B cell (primary cell): ENCODE measurements at regions of chr11 and their contacts with region 1.

Region 1: GRCh38 chr11:61899146-61899841 is 7.9 kb upstream of the FADS3 start:
- DNase-seq: peak; percentile 96
- ATAC-seq: peak; percentile 96
- H3K4me3 ChIP-seq: no peak overlapping the region
- H3K4me3 Mint-ChIP-seq: peak overlapping the region; percentile 41
- H3K27ac ChIP-seq: peak overlapping the region in 1 of 2 donors; percentile 33
- H3K27ac Mint-ChIP-seq: peak overlapping the region; percentile 85
- H3K4me1 ChIP-seq: peaks cover 21 to 31% of the 10 kb centered on the region in 2 donors
- H3K4me1 Mint-ChIP-seq: peaks cover 26% of the 10 kb centered on the region
- H3K27me3 ChIP-seq: peaks cover 0 to 3% (median 2%) of the 10 kb centered on the region in 4 experiments
- H3K27me3 Mint-ChIP-seq: peaks cover 4% of the 10 kb centered on the region
- CTCF ChIP-seq: peak; percentile 100

Region 2: DNA sequence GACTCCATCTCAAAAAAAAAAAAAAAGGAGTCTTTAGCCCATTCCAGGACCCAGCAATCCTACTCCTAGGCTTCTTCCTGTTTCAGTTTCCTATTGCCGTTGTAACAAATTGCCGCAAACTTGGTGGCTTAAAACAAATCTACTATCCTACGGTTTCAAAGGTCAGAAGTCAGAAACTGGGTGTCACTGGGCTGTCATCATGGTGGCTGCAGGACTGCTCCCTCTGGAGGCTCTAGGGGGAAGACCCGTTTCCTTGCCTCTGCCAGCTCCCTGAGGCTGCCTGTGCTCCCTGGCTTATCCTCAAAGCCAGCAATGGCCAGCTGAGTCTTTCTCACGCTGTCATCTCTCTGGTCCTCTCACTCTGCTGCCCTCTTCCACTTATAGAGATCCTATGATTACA is 227.8 kb before region 1 on chr11:
- CTCF ChIA-PET with region 1: no interaction called
- POLR2A ChIA-PET with region 1: no interaction called
- intact Hi-C with region 1: no loop called
- DNase-seq: no peak
- ATAC-seq: no peak
- H3K4me3 ChIP-seq: no peak overlapping the region
- H3K4me3 Mint-ChIP-seq: no peak overlapping the region
- H3K27ac ChIP-seq: no peak overlapping the region
- H3K27ac Mint-ChIP-seq: no peak overlapping the region
- H3K4me1 ChIP-seq: no peaks in the 10 kb centered on the region
- H3K4me1 Mint-ChIP-seq: no peaks in the 10 kb centered on the region
- H3K27me3 ChIP-seq: peaks cover 0 to 6% (median 1%) of the 10 kb centered on the region in 4 experiments
- H3K27me3 Mint-ChIP-seq: peaks cover 34% of the 10 kb centered on the region
- CTCF ChIP-seq: no peak

Region 3: GRCh38 chr11:61871158-61871597 is 28.1 kb before region 1 on chr11:
- CTCF ChIA-PET with region 1: interaction called, 141 read pairs
- POLR2A ChIA-PET with region 1: no interaction called
- intact Hi-C with region 1: loop called (anchors 1 kb)
- DNase-seq: peak; percentile 88
- ATAC-seq: peak; percentile 97
- H3K4me3 ChIP-seq: peak overlapping the region in 4 of 5 experiments; percentile 13 to 38 (median 26)
- H3K4me3 Mint-ChIP-seq: peak overlapping the region; percentile 84
- H3K27ac ChIP-seq: no peak overlapping the region
- H3K27ac Mint-ChIP-seq: peak overlapping the region; percentile 83
- H3K4me1 ChIP-seq: peaks cover 9 to 12% of the 10 kb centered on the region in 2 donors
- H3K4me1 Mint-ChIP-seq: peaks cover 8% of the 10 kb centered on the region
- H3K27me3 ChIP-seq: peaks cover 0 to 4% (median 0%) of the 10 kb centered on the region in 4 experiments
- H3K27me3 Mint-ChIP-seq: no peaks in the 10 kb centered on the region
- CTCF ChIP-seq: peak; percentile 98

Region 4: DNA sequence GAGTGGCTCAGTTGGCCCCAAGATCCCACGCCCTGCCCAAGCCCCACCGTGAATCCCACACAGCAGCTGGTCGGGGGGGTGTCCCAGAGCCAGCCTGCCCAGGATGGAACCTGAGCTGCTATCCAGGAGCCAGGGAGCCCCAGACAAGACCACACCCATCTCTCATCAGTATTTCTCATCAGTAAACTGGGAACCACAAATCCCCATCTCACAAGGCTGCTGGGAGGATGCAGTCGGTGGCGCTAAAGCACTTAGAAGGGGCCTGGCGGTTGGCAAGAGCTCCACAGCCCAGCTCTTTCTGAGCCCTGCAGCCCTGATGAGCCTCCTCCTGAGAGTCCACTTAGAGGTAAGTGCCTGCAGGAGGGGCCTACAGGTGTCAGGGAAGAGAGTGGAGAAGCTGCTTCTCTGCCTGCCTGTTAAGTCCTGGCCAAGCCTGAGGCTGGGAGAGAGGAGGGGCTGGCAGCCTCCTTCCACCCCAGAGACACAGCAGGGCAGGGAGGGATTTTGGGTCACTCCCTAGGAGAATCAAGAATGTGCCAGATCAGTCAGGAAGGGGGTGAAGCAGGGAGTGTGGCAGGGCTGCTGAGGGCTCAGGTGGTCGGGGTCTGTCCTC is 14.0 kb before region 1 on chr11:
- CTCF ChIA-PET with region 1: interaction called, 144 read pairs
- POLR2A ChIA-PET with region 1: interaction called, 9 read pairs
- intact Hi-C with region 1: loop called (anchors 1 kb)
- DNase-seq: no peak
- ATAC-seq: no peak
- H3K4me3 ChIP-seq: no peak overlapping the region
- H3K4me3 Mint-ChIP-seq: no peak overlapping the region
- H3K27ac ChIP-seq: no peak overlapping the region
- H3K27ac Mint-ChIP-seq: no peak overlapping the region
- H3K4me1 ChIP-seq: peaks cover 21 to 48% of the 10 kb centered on the region in 2 donors
- H3K4me1 Mint-ChIP-seq: peaks cover 49% of the 10 kb centered on the region
- H3K27me3 ChIP-seq: no peaks in the 10 kb centered on the region
- H3K27me3 Mint-ChIP-seq: no peaks in the 10 kb centered on the region
- CTCF ChIP-seq: no peak

Region 5: GRCh38 chr11:61947486-61948210 is 48.4 kb after region 1 on chr11:
- CTCF ChIA-PET with region 1: interaction called, 172 read pairs
- POLR2A ChIA-PET with region 1: interaction called, 4 read pairs
- intact Hi-C with region 1: loop called (anchors 1 kb)
- DNase-seq: peak; percentile 82
- ATAC-seq: peak; percentile 90
- H3K4me3 ChIP-seq: no peak overlapping the region
- H3K4me3 Mint-ChIP-seq: no peak overlapping the region
- H3K27ac ChIP-seq: no peak overlapping the region
- H3K27ac Mint-ChIP-seq: peak overlapping the region; percentile 3
- H3K4me1 ChIP-seq: peaks cover 7 to 9% of the 10 kb centered on the region in 2 donors
- H3K4me1 Mint-ChIP-seq: peaks cover 8% of the 10 kb centered on the region
- H3K27me3 ChIP-seq: no peaks in the 10 kb centered on the region
- H3K27me3 Mint-ChIP-seq: peaks cover 4% of the 10 kb centered on the region
- CTCF ChIP-seq: peak; percentile 90

Region 6: GRCh38 chr11:62061351-62062222 is 162.3 kb after region 1 on chr11:
- CTCF ChIA-PET with region 1: interaction called, 13 read pairs
- POLR2A ChIA-PET with region 1: no interaction called
- intact Hi-C with region 1: no loop called
- DNase-seq: no peak
- ATAC-seq: no peak
- H3K4me3 ChIP-seq: no peak overlapping the region
- H3K4me3 Mint-ChIP-seq: no peak overlapping the region
- H3K27ac ChIP-seq: no peak overlapping the region
- H3K27ac Mint-ChIP-seq: no peak overlapping the region
- H3K4me1 ChIP-seq: no peaks in the 10 kb centered on the region
- H3K4me1 Mint-ChIP-seq: no peaks in the 10 kb centered on the region
- H3K27me3 ChIP-seq: no peaks in the 10 kb centered on the region
- H3K27me3 Mint-ChIP-seq: peaks cover 11% of the 10 kb centered on the region
- CTCF ChIP-seq: no peak

Region 7: GRCh38 chr11:62169091-62169847 is 270.0 kb after region 1 on chr11:
- CTCF ChIA-PET with region 1: no interaction called
- POLR2A ChIA-PET with region 1: no interaction called
- intact Hi-C with region 1: no loop called
- DNase-seq: no peak
- ATAC-seq: no peak
- H3K4me3 ChIP-seq: no peak overlapping the region
- H3K4me3 Mint-ChIP-seq: no peak overlapping the region
- H3K27ac ChIP-seq: no peak overlapping the region
- H3K27ac Mint-ChIP-seq: no peak overlapping the region
- H3K4me1 ChIP-seq: peaks cover 0 to 3% of the 10 kb centered on the region in 2 donors
- H3K4me1 Mint-ChIP-seq: peaks cover 5% of the 10 kb centered on the region
- H3K27me3 ChIP-seq: peaks cover 0 to 22% (median 8%) of the 10 kb centered on the region in 4 experiments
- H3K27me3 Mint-ChIP-seq: peaks cover 63% of the 10 kb centered on the region
- CTCF ChIP-seq: no peak